ENCODE measurements at regions of chr19 and their contacts with region 1.

Region 1: GRCh38 chr19:52028027-52028779 is at the start of gene ZNF614:
- DNase-seq: peak; percentile 90
- ATAC-seq: peak; percentile 96
- H3K4me3 Mint-ChIP-seq: peak within 1 kb of the TSS; percentile 77
- H3K27ac Mint-ChIP-seq: peak within 1 kb of the TSS; percentile 95
- H3K4me1 Mint-ChIP-seq: peaks cover 15% of the 10 kb centered on the region
- H3K27me3 Mint-ChIP-seq: no peaks in the 10 kb centered on the region
- total RNA-seq, gene ZNF614: 9.8 to 11.7 TPM

Region 2: GRCh38 chr19:52048555-52049501 is 20.6 kb after region 1 on chr19 and contains the start of gene ZNF432:
- CTCF ChIA-PET with region 1: no interaction called
- POLR2A ChIA-PET with region 1: interaction called, 10 read pairs
- DNase-seq: peak; percentile 87
- ATAC-seq: peak; percentile 92
- H3K4me3 Mint-ChIP-seq: peak within 1 kb of the TSS; percentile 95
- H3K27ac Mint-ChIP-seq: peak within 1 kb of the TSS; percentile 96
- H3K4me1 Mint-ChIP-seq: peaks cover 20% of the 10 kb centered on the region
- H3K27me3 Mint-ChIP-seq: no peaks in the 10 kb centered on the region
- total RNA-seq, gene ZNF432: 15.6 to 16.0 TPM

Measured in activated CD8-positive, alpha-beta T cell treated with anti-CD3 and anti-CD28 coated beads, Interleukin-2, amount 10 ng/mL, durations not matched to agents 7 days and 5 days (primary cell).